Natural killer cell (primary cell): ENCODE measurements at regions of chr5 and their contacts with region 1.

Region 1: DNA sequence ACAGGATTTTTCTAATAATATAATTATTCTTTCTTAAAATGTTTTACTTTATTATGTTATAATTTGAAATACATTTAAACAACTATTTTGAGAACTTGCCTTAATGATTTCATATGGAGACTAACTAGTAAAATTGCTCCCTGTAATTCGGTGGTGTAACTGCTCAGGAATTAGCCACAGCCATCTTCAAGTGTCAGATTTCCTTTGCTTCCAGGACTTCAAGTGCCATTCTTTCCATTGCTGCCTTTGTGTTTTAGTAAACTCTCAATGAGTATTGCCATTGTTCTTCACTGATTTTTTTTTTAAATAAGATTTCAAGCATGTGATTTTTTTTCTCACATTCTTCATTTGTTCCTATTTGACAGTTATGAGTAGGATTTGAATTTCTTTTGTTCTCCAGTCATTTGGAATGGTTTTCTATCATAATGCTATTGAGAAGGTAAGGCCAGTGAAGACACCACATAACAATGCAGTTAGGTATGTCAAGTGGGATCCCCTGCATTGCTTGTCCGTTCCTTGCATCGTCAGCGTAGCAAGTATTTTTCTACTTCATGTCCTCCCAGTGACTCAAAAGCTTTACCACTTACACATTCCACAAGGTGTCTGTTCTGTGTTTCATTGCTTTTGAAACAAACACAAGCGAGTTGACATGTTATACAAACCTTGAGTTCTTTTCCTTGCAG is 83.7 kb downstream of the LNPEP start:
- DNase-seq: no peak
- ATAC-seq: no peak
- H3K4me3 ChIP-seq: no peak overlapping the region
- H3K4me3 Mint-ChIP-seq: no peak overlapping the region
- H3K27ac ChIP-seq: no peak overlapping the region
- H3K27ac Mint-ChIP-seq: peak overlapping the region; percentile 29 to 53
- H3K4me1 ChIP-seq: peaks cover 10% of the 10 kb centered on the region
- H3K4me1 Mint-ChIP-seq: peaks cover 35 to 54% of the 10 kb centered on the region in 2 donors
- H3K27me3 ChIP-seq: no peaks in the 10 kb centered on the region
- H3K27me3 Mint-ChIP-seq: no peaks in the 10 kb centered on the region
- CTCF ChIP-seq: no peak

Region 2: GRCh38 chr5:96752341-96753016 is 267.1 kb before region 1 on chr5:
- intact Hi-C with region 1: loop called (anchors 10 kb)
- DNase-seq: peak in 1 of 2 donors; percentile 85
- ATAC-seq: peak; percentile 58 to 78 (median 61)
- H3K4me3 ChIP-seq: no peak overlapping the region
- H3K4me3 Mint-ChIP-seq: no peak overlapping the region
- H3K27ac ChIP-seq: no peak overlapping the region
- H3K27ac Mint-ChIP-seq: peak overlapping the region in 1 of 2 donors; percentile 78
- H3K4me1 ChIP-seq: no peaks in the 10 kb centered on the region
- H3K4me1 Mint-ChIP-seq: peaks cover 0 to 9% of the 10 kb centered on the region in 2 donors
- H3K27me3 ChIP-seq: no peaks in the 10 kb centered on the region
- H3K27me3 Mint-ChIP-seq: no peaks in the 10 kb centered on the region
- CTCF ChIP-seq: peak; percentile 83

Region 3: DNA sequence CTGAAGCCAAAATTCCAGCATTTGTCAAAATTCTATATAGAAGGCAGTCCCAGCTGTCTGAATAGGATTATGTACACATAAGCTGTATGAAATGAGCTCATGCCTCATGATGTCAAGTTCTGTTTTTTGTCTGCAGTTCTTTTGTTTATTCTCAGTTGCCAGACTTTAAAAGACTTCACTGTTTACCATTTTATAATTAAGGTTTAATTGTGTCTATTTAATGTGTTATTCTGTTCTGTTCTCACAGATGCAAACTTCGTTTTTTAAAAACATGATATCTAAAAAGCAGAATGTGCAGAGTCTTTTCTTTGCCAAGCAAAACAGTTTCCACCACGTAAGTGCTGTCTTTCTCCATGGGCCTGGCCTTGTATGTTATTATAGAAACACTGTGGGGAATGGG is 243.0 kb before region 1 on chr5:
- intact Hi-C with region 1: loop called (anchors 10 kb)
- DNase-seq: no peak
- ATAC-seq: no peak
- H3K4me3 ChIP-seq: no peak overlapping the region
- H3K4me3 Mint-ChIP-seq: no peak overlapping the region
- H3K27ac ChIP-seq: no peak overlapping the region
- H3K27ac Mint-ChIP-seq: peak overlapping the region in 1 of 2 donors; percentile 24
- H3K4me1 ChIP-seq: no peaks in the 10 kb centered on the region
- H3K4me1 Mint-ChIP-seq: peaks cover 6 to 12% of the 10 kb centered on the region in 2 donors
- H3K27me3 ChIP-seq: no peaks in the 10 kb centered on the region
- H3K27me3 Mint-ChIP-seq: no peaks in the 10 kb centered on the region
- CTCF ChIP-seq: no peak